ENCODE measurements at regions of chr5 and their contacts with region 1.

Region 1: GRCh38 chr5:149551200-149552037 is at the start of gene CSNK1A1:
- DNase-seq: peak; percentile 99
- ATAC-seq: peak; percentile 93
- H3K4me3 Mint-ChIP-seq: peak within 1 kb of the TSS; percentile 96
- H3K27ac Mint-ChIP-seq: peak within 1 kb of the TSS; percentile 99
- H3K4me1 Mint-ChIP-seq: peaks cover 33% of the 10 kb centered on the region
- H3K27me3 Mint-ChIP-seq: no peaks in the 10 kb centered on the region
- total RNA-seq, gene CSNK1A1: 163 to 177 TPM

Region 2: GRCh38 chr5:149400304-149400703 is 151.1 kb before region 1 on chr5:
- CTCF ChIA-PET with region 1: no interaction called
- POLR2A ChIA-PET with region 1: no interaction called
- DNase-seq: no peak
- ATAC-seq: no peak
- H3K4me3 Mint-ChIP-seq: no peak overlapping the region
- H3K27ac Mint-ChIP-seq: no peak overlapping the region
- H3K4me1 Mint-ChIP-seq: no peaks in the 10 kb centered on the region
- H3K27me3 Mint-ChIP-seq: no peaks in the 10 kb centered on the region

Region 3: DNA sequence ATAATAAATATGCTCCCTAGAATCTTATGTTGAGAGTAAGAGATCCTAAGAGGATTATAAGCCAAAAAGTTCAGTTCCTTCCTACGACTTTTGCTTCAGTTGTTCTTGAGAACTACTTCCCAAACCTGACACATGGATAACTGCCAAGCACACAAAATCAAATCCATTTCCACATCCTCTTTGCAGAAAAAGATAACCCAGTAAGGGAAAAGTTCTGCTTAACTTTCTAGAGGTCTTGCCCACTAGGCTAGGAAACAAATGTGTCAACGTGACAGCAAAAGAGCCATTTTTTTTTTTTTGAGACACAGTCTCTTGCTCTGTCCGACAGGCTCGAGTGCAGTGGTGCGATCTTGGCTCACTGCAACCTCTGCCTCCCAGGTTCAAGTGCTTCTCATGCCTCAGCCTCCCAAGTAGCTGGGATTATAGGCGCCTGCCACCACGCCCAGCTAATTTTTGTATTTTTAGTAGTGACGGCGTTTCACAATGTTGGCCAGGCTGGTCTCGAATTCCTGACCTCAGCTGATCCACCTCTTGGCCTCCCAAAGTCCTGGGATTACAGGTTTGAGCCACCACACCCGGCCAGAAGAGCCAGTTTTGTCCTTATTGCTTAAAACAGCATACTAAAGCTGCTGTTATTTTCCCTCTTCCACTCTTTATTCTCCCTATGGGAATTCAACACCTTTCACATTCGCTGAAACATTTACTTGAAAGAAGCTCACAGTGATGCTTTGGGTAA is 24.4 kb before region 1 on chr5:
- CTCF ChIA-PET with region 1: interaction called, 12 read pairs
- POLR2A ChIA-PET with region 1: interaction called, 7 read pairs
- DNase-seq: no peak
- ATAC-seq: no peak
- H3K4me3 Mint-ChIP-seq: no peak overlapping the region
- H3K27ac Mint-ChIP-seq: no peak overlapping the region
- H3K4me1 Mint-ChIP-seq: peaks cover 28% of the 10 kb centered on the region
- H3K27me3 Mint-ChIP-seq: no peaks in the 10 kb centered on the region

Region 4: GRCh38 chr5:149537374-149537975 is 13.9 kb before region 1 on chr5:
- CTCF ChIA-PET with region 1: interaction called, 4 read pairs
- POLR2A ChIA-PET with region 1: interaction called, 11 read pairs
- DNase-seq: no peak
- ATAC-seq: no peak
- H3K4me3 Mint-ChIP-seq: no peak overlapping the region
- H3K27ac Mint-ChIP-seq: no peak overlapping the region
- H3K4me1 Mint-ChIP-seq: peaks cover 42% of the 10 kb centered on the region
- H3K27me3 Mint-ChIP-seq: no peaks in the 10 kb centered on the region

Region 5: DNA sequence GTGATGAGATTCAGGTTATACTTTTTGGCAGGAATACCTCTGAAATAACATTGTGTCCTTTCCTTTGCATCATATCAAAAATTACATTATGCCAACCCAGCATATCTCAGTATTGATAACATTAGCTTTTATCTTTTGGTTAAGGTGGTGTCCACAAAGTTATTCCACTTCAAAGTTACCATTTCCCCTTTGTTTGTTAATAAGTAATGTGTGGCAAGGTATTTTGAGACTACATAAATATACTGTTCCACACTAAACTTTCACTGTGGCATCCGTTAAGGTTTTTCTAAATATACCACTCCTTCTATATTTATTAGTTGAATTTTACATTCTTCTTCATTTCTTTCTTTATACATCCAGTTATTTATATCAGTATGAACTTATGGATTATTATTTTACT is 15.8 kb after region 1 on chr5:
- CTCF ChIA-PET with region 1: interaction called, 20 read pairs
- POLR2A ChIA-PET with region 1: interaction called, 7 read pairs
- DNase-seq: no peak
- ATAC-seq: no peak
- H3K4me3 Mint-ChIP-seq: no peak overlapping the region
- H3K27ac Mint-ChIP-seq: no peak overlapping the region
- H3K4me1 Mint-ChIP-seq: peaks cover 7% of the 10 kb centered on the region
- H3K27me3 Mint-ChIP-seq: no peaks in the 10 kb centered on the region

Region 6: DNA sequence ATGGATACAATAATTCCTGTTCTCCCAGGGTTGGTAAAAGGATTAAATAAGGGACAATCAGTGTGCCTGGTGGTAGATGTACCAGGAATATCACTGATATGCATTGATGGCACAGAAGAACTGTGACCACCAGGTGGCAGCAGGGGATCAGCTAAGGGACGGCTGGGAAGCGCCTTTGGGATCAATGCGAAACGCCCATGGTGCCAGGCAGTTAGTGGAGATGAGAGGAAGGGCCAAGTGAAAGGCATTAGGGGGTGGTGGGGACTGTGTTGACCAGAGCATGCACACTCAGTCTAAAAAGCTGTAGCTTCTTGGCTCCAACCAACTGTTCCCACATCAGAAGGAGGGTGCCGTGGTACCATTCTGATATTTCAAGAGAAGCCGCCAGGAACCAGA is 85.4 kb after region 1 on chr5:
- CTCF ChIA-PET with region 1: no interaction called
- POLR2A ChIA-PET with region 1: no interaction called
- DNase-seq: peak; percentile 65
- ATAC-seq: peak; percentile 72
- H3K4me3 Mint-ChIP-seq: no peak overlapping the region
- H3K27ac Mint-ChIP-seq: no peak overlapping the region
- H3K4me1 Mint-ChIP-seq: peaks cover 7% of the 10 kb centered on the region
- H3K27me3 Mint-ChIP-seq: no peaks in the 10 kb centered on the region

Measured in activated CD8-positive, alpha-beta T cell treated with anti-CD3 and anti-CD28 coated beads, Interleukin-2, amount 10 ng/mL, durations not matched to agents 7 days and 5 days (primary cell).